Activated CD4-positive, alpha-beta memory T cell treated with anti-CD3 and anti-CD28 coated beads, Interleukin-2, amount 10 ng/mL, durations not matched to agents 7 days and 5 days (primary cell): ENCODE measurements at regions of chr4 and their contacts with region 1.

Region 1: GRCh38 chr4:38034986-38035882 is 75.0 kb downstream of the PTTG2 start:
- DNase-seq: no peak
- H3K4me3 Mint-ChIP-seq: no peak overlapping the region
- H3K27ac Mint-ChIP-seq: no peak overlapping the region
- H3K4me1 Mint-ChIP-seq: no peaks in the 10 kb centered on the region
- H3K27me3 Mint-ChIP-seq: no peaks in the 10 kb centered on the region

Region 2: DNA sequence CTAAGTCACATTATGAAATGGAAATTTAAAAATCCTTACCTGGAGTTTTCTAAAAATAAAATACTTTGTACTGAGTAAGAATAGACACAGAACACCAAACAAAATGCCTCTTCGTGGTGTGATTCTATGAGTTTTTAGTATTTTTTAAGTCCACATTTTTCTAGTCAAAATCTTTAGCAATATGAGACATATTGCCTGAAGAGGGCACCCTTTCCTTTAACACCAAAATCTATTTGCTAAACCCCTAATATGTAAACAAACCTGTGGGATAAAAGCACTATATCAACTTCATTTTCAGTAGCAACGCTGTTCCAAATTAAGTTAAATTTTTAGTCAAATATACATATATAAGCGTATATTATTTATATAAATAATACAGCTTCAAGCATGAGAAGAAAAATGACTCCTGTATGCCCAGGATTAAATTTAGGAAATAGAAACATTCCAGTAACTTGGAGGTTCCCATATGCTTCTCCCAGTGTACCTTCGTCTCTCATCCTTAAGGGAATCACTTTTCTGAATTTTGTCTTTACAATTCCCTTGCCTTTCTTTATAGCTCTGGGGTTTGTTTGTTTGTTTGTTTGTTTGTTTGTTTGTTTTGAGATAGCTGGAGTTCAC is 231.8 kb before region 1 on chr4:
- CTCF ChIA-PET with region 1: interaction called, 22 read pairs
- POLR2A ChIA-PET with region 1: interaction called, 3 read pairs
- DNase-seq: no peak
- H3K4me3 Mint-ChIP-seq: no peak overlapping the region
- H3K27ac Mint-ChIP-seq: no peak overlapping the region
- H3K4me1 Mint-ChIP-seq: no peaks in the 10 kb centered on the region
- H3K27me3 Mint-ChIP-seq: peaks cover 18% of the 10 kb centered on the region

Region 3: DNA sequence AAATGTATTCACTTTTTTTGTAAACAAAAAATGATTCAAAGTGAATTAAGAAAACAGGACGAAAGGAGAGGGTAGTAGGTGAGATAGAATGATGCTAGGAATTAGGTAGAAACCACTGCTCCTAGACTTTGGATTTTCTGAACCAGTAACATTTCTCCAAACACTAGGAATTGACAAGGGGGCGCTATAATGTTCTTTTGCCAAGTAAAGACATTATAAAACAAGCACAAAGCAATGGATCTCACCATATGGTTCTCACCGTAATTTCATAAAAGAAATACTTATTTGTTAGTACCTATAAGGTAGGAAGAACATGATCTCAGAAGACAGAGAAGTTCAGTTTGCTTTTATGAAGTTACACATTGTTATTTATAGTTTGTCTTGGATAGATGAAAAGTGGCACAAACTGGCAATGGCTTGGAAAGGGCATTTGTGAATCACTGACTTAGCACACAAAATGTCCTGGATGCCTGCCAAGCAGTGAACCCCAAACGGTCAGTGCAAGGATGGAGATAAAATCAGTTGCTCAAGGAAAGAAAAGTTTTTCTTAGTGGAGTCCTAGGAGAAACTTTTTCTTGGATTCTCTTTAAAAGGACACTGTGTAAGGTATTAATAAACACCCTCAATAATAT is 152.5 kb before region 1 on chr4:
- CTCF ChIA-PET with region 1: no interaction called
- POLR2A ChIA-PET with region 1: no interaction called
- DNase-seq: no peak
- H3K4me3 Mint-ChIP-seq: no peak overlapping the region
- H3K27ac Mint-ChIP-seq: no peak overlapping the region
- H3K4me1 Mint-ChIP-seq: peaks cover 6% of the 10 kb centered on the region
- H3K27me3 Mint-ChIP-seq: peaks cover 23% of the 10 kb centered on the region

Region 4: DNA sequence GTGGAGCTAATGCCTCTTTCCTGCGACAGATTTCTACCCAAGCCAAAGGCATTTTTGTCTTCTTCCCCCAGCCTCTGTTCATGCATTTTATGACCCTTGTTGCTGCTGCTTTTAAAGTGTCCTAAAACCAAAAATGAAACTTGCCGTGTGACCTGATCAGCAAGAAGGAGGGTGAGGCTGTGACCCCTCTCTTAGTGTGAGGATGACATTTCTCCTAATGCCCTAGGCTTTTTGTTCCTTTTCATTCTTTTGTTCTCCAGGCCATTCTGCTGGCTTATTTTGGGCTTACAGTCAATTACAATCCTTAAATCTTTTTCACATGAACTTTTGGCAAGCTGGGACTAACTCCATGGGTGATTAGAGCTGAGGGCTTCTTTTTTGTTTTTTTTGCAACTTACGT is 40.7 kb before region 1 on chr4:
- CTCF ChIA-PET with region 1: no interaction called
- POLR2A ChIA-PET with region 1: no interaction called
- DNase-seq: no peak
- H3K4me3 Mint-ChIP-seq: no peak overlapping the region
- H3K27ac Mint-ChIP-seq: no peak overlapping the region
- H3K4me1 Mint-ChIP-seq: peaks cover 10% of the 10 kb centered on the region
- H3K27me3 Mint-ChIP-seq: no peaks in the 10 kb centered on the region